PC-9 (cell line): ENCODE measurements at regions of chr12 and their contacts with region 1.

Region 1: GRCh38 chr12:132523576-132524331 is 33.8 kb downstream of the FBRSL1 start:
- DNase-seq: peak in 1 of 2 experiments; percentile 63
- H3K4me3 ChIP-seq: no peak overlapping the region
- H3K27ac ChIP-seq: no peak overlapping the region
- H3K4me1 ChIP-seq: peaks cover 26% of the 10 kb centered on the region
- H3K27me3 ChIP-seq: no peaks in the 10 kb centered on the region
- CTCF ChIP-seq: peak; percentile 83

Region 2: GRCh38 chr12:132456186-132456943 is 67.4 kb before region 1 on chr12:
- CTCF ChIA-PET with region 1: interaction called, 11 read pairs
- POLR2A ChIA-PET with region 1: no interaction called
- intact Hi-C with region 1: no loop called
- DNase-seq: no peak
- H3K4me3 ChIP-seq: no peak overlapping the region
- H3K27ac ChIP-seq: no peak overlapping the region
- H3K4me1 ChIP-seq: 0 out of 2 replicates have a peak, but pooled peaks cover 8% of the 10 kb centered on the region
- H3K27me3 ChIP-seq: peaks cover 66% of the 10 kb centered on the region
- CTCF ChIP-seq: no peak

Region 3: DNA sequence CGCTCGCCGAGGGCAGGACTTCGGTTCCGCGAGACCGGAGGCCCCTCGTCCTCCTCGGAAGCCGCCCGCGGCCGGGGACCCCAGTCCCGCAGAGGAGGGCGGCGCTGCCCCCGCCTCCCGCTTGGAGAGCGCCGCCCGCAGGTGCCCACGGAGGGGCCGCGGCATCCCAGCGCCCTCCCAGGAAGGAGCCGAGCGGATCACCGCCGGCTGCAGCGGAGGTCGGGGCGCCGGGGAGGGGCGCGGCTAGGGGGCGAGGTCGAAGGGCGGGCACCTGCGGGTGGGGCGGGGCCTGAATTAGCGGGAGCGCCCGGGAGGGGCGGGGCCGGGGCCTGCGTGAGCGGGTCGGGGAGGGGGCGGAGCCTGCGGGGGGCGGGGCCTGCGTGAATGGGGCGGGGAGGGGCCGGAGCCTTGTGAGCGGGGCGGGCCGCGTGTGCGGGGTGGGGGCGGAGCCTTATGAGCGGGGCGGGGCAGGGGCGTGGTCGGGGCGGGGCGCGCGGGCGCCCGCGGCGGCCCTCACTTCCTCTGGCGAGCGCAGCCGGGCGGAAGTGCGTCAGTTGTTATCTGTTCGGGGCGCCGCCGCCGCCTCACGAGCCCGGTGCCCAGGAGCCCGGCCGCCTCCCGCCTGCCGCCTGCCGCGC is 34.0 kb before region 1 on chr12 and contains the start of gene FBRSL1:
- CTCF ChIA-PET with region 1: no interaction called
- POLR2A ChIA-PET with region 1: no interaction called
- intact Hi-C with region 1: loop called (anchors 1 kb)
- DNase-seq: peak; percentile 61 to 77
- H3K4me3 ChIP-seq: peak within 1 kb of the TSS; percentile 81
- H3K27ac ChIP-seq: no peak within 1 kb of the TSS
- H3K4me1 ChIP-seq: peaks cover 38% of the 10 kb centered on the region
- H3K27me3 ChIP-seq: peaks cover 43% of the 10 kb centered on the region
- CTCF ChIP-seq: no peak
- total RNA-seq, gene FBRSL1: 59.5 and 76.1 TPM in 2 replicates